ENCODE measurements at regions of chr2 and their contacts with region 1.

Region 1: DNA sequence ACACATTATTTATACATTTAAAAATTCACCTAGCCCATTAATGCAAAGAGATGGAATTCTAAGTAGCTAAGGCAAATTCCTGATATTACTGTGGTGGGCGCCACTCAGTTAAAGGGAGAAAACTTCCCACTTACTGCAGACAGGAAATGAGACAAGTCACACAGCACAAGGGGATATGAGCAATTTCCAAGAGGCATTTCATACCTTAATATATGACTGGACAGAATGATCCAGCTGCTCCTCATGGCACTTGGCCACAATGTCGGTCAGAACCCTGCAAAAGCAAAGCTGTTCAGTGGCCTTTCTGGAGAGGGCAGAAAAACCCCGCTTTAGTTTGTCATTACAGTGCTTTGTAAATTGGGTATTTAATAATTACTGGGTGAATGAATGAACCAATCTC is 121.4 kb upstream of the CCDC195 start:
- DNase-seq: no peak
- H3K4me3 Mint-ChIP-seq: no peak overlapping the region
- H3K27ac Mint-ChIP-seq: no peak overlapping the region
- H3K4me1 Mint-ChIP-seq: peaks cover 2% of the 10 kb centered on the region
- H3K27me3 Mint-ChIP-seq: no peaks in the 10 kb centered on the region

Region 2: GRCh38 chr2:224796695-224797305 is 40.8 kb before region 1 on chr2:
- intact Hi-C with region 1: loop called (anchors 5 kb)
- DNase-seq: no peak
- H3K4me3 Mint-ChIP-seq: no peak overlapping the region
- H3K27ac Mint-ChIP-seq: no peak overlapping the region
- H3K4me1 Mint-ChIP-seq: no peaks in the 10 kb centered on the region
- H3K27me3 Mint-ChIP-seq: no peaks in the 10 kb centered on the region

Region 3: DNA sequence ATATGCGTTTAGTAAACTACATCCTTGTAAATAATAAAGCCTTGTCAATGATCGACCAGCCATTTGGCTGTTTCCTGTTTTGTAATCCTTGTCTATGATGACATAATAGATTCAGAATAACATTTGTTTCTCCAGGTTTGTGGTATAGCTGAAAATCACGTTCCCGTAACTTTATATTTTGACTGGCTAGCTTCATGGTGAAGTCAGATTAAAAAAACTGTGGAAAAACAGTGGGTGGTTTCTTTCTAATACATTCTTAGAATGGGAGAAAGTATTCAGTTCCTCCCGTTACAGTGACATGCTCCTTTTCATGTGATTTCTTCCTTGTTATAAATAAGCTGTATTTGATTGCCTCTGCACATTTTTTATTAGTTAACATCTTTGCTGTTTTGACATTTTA is 928.9 kb after region 1 on chr2:
- intact Hi-C with region 1: no loop called
- DNase-seq: no peak
- H3K4me3 Mint-ChIP-seq: no peak overlapping the region
- H3K27ac Mint-ChIP-seq: no peak overlapping the region
- H3K4me1 Mint-ChIP-seq: no peaks in the 10 kb centered on the region
- H3K27me3 Mint-ChIP-seq: no peaks in the 10 kb centered on the region